ENCODE measurements at regions of chr1 and their contacts with region 1.

Region 1: GRCh38 chr1:95043141-95043980 is 29.4 kb downstream of the ALG14 start:
- DNase-seq: peak; percentile 87
- ATAC-seq: peak; percentile 99
- H3K4me3 ChIP-seq: no peak overlapping the region
- H3K4me3 Mint-ChIP-seq: no peak overlapping the region
- H3K27ac ChIP-seq: no peak overlapping the region
- H3K27ac Mint-ChIP-seq: no peak overlapping the region
- H3K4me1 ChIP-seq: peaks cover 0 to 3% of the 10 kb centered on the region in 2 donors
- H3K4me1 Mint-ChIP-seq: no peaks in the 10 kb centered on the region
- H3K27me3 ChIP-seq: no peaks in the 10 kb centered on the region
- H3K27me3 Mint-ChIP-seq: no peaks in the 10 kb centered on the region
- CTCF ChIP-seq: peak; percentile 99

Region 2: GRCh38 chr1:94481473-94481933 is 561.9 kb before region 1 on chr1:
- CTCF ChIA-PET with region 1: interaction called, 11 read pairs
- POLR2A ChIA-PET with region 1: no interaction called
- intact Hi-C with region 1: no loop called
- DNase-seq: peak; percentile 69
- ATAC-seq: peak; percentile 79
- H3K4me3 ChIP-seq: no peak overlapping the region
- H3K4me3 Mint-ChIP-seq: no peak overlapping the region
- H3K27ac ChIP-seq: no peak overlapping the region
- H3K27ac Mint-ChIP-seq: no peak overlapping the region
- H3K4me1 ChIP-seq: no peaks in the 10 kb centered on the region
- H3K4me1 Mint-ChIP-seq: no peaks in the 10 kb centered on the region
- H3K27me3 ChIP-seq: no peaks in the 10 kb centered on the region
- H3K27me3 Mint-ChIP-seq: no peaks in the 10 kb centered on the region
- CTCF ChIP-seq: peak; percentile 90

Region 3: GRCh38 chr1:94863919-94864318 is 179.4 kb before region 1 on chr1:
- CTCF ChIA-PET with region 1: interaction called, 243 read pairs
- POLR2A ChIA-PET with region 1: no interaction called
- intact Hi-C with region 1: no loop called
- DNase-seq: no peak
- ATAC-seq: no peak
- H3K4me3 ChIP-seq: no peak overlapping the region
- H3K4me3 Mint-ChIP-seq: no peak overlapping the region
- H3K27ac ChIP-seq: no peak overlapping the region
- H3K27ac Mint-ChIP-seq: no peak overlapping the region
- H3K4me1 ChIP-seq: no peaks in the 10 kb centered on the region
- H3K4me1 Mint-ChIP-seq: no peaks in the 10 kb centered on the region
- H3K27me3 ChIP-seq: peaks cover 0 to 5% (median 0%) of the 10 kb centered on the region in 4 experiments
- H3K27me3 Mint-ChIP-seq: peaks cover 4% of the 10 kb centered on the region
- CTCF ChIP-seq: no peak

Region 4: GRCh38 chr1:94983171-94983739 is 60.1 kb before region 1 on chr1:
- CTCF ChIA-PET with region 1: interaction called, 11 read pairs
- POLR2A ChIA-PET with region 1: no interaction called
- intact Hi-C with region 1: loop called (anchors 5 kb)
- DNase-seq: no peak
- ATAC-seq: no peak
- H3K4me3 ChIP-seq: no peak overlapping the region
- H3K4me3 Mint-ChIP-seq: no peak overlapping the region
- H3K27ac ChIP-seq: no peak overlapping the region
- H3K27ac Mint-ChIP-seq: no peak overlapping the region
- H3K4me1 ChIP-seq: peaks cover 29 to 30% of the 10 kb centered on the region in 2 donors
- H3K4me1 Mint-ChIP-seq: peaks cover 44% of the 10 kb centered on the region
- H3K27me3 ChIP-seq: no peaks in the 10 kb centered on the region
- H3K27me3 Mint-ChIP-seq: no peaks in the 10 kb centered on the region
- CTCF ChIP-seq: no peak

Region 5: GRCh38 chr1:95072532-95073419 is 29.4 kb after region 1 on chr1 and contains the start of gene ALG14:
- CTCF ChIA-PET with region 1: interaction called, 13 read pairs
- POLR2A ChIA-PET with region 1: no interaction called
- intact Hi-C with region 1: loop called (anchors 2 kb)
- DNase-seq: peak; percentile 98
- ATAC-seq: peak; percentile 95
- H3K4me3 ChIP-seq: peak within 1 kb of the TSS; percentile 78 to 92 (median 86)
- H3K4me3 Mint-ChIP-seq: peak within 1 kb of the TSS; percentile 98
- H3K27ac ChIP-seq: peak within 1 kb of the TSS; percentile 66 to 70
- H3K27ac Mint-ChIP-seq: peak within 1 kb of the TSS; percentile 99
- H3K4me1 ChIP-seq: peaks cover 11 to 14% of the 10 kb centered on the region in 2 donors
- H3K4me1 Mint-ChIP-seq: peaks cover 20% of the 10 kb centered on the region
- H3K27me3 ChIP-seq: peaks cover 0 to 2% (median 0%) of the 10 kb centered on the region in 4 experiments
- H3K27me3 Mint-ChIP-seq: no peaks in the 10 kb centered on the region
- CTCF ChIP-seq: no peak
- total RNA-seq, gene ALG14: 2.6 and 3.3 TPM in 2 replicates

Region 6: GRCh38 chr1:95304803-95305202 is 261.4 kb after region 1 on chr1:
- CTCF ChIA-PET with region 1: no interaction called
- POLR2A ChIA-PET with region 1: no interaction called
- intact Hi-C with region 1: no loop called
- DNase-seq: no peak
- ATAC-seq: no peak
- H3K4me3 ChIP-seq: no peak overlapping the region
- H3K4me3 Mint-ChIP-seq: no peak overlapping the region
- H3K27ac ChIP-seq: no peak overlapping the region
- H3K27ac Mint-ChIP-seq: no peak overlapping the region
- H3K4me1 ChIP-seq: no peaks in the 10 kb centered on the region
- H3K4me1 Mint-ChIP-seq: no peaks in the 10 kb centered on the region
- H3K27me3 ChIP-seq: peaks cover 0 to 7% (median 5%) of the 10 kb centered on the region in 4 experiments
- H3K27me3 Mint-ChIP-seq: peaks cover 22% of the 10 kb centered on the region
- CTCF ChIP-seq: no peak